ENCODE measurements at regions of chr17 and their contacts with region 1.

Region 1: DNA sequence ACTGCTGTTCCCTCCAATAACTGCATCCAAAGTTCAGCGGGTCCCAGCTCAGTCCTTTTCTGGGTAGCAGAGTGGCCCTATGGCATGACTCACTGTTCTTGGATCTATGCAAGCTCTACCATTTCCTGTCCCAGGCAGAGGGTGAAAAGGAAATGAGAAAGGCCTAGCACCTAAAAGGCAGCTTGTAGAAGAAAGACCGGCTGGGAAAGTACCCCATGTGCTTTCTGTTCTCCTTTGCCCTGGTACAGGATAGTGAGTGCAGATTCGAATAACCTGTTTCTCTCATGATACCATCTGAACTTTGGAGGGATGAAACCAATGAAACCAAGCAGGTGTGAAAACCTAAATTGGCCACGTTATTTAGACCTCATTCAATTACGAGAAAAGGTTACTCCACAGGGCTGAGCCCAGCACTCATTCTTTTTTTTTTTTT is 12.7 kb upstream of the HASPIN start:
- DNase-seq: peak; percentile 82
- ATAC-seq: peak; percentile 98
- H3K4me3 Mint-ChIP-seq: peak overlapping the region; percentile 55
- H3K27ac Mint-ChIP-seq: peak overlapping the region; percentile 83
- H3K4me1 Mint-ChIP-seq: peaks cover 55% of the 10 kb centered on the region
- H3K27me3 Mint-ChIP-seq: no peaks in the 10 kb centered on the region

Region 2: GRCh38 chr17:3683054-3683511 is 27.9 kb before region 1 on chr17:
- CTCF ChIA-PET with region 1: interaction called, 4 read pairs
- POLR2A ChIA-PET with region 1: no interaction called
- intact Hi-C with region 1: loop called in 1 of 2 experiments (anchors 2 kb)
- DNase-seq: peak; percentile 76
- ATAC-seq: peak; percentile 96
- H3K4me3 Mint-ChIP-seq: no peak overlapping the region
- H3K27ac Mint-ChIP-seq: peak overlapping the region; percentile 39
- H3K4me1 Mint-ChIP-seq: peaks cover 10% of the 10 kb centered on the region
- H3K27me3 Mint-ChIP-seq: no peaks in the 10 kb centered on the region

Region 3: DNA sequence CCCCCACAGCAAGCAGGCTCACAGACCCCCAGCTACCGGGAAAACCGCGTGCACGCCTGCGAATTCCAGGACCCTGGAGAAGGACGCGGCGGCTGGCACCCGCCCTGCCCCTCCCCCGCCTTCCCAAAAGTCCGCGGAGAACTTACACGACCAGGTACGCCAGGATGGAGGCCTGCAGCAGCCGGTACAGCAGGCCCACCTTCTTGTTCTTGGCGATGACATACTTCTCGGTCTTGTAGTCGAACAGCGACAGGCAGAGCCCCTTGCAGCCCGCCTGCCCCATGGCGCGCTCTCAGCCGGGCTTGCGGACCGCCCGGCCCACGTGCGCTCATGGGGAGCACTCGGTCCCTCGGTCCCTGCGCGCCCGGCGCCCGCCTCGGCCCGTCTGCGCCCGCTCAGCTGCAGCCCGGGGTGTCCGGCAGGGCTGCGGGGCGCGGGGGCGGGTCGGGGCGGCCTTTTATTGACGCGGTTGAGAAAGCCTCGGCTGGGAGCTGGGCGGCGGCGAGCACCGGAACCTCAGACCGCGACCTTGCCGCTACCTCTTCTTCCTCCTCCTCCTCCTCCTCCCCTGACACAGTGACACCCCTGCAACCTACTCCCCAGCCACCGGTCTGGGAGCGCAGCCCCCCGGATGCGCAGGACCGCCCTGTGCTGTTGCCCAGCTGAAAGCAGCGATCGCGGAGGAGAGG is 15.1 kb before region 1 on chr17 and contains the start of gene P2RX5:
- CTCF ChIA-PET with region 1: interaction called, 6 read pairs
- POLR2A ChIA-PET with region 1: interaction called, 6 read pairs
- intact Hi-C with region 1: loop called (anchors 1 to 2 kb)
- DNase-seq: peak; percentile 67
- ATAC-seq: peak; percentile 48
- H3K4me3 Mint-ChIP-seq: peak within 1 kb of the TSS; percentile 81
- H3K27ac Mint-ChIP-seq: peak within 1 kb of the TSS; percentile 94
- H3K4me1 Mint-ChIP-seq: peaks cover 15% of the 10 kb centered on the region
- H3K27me3 Mint-ChIP-seq: no peaks in the 10 kb centered on the region
- total RNA-seq, gene P2RX5: 69.7 to 77.5 TPM

Region 4: GRCh38 chr17:3761036-3761917 is 50.3 kb after region 1 on chr17:
- CTCF ChIA-PET with region 1: interaction called, 3 read pairs
- POLR2A ChIA-PET with region 1: interaction called, 3 read pairs
- intact Hi-C with region 1: loop called in 1 of 2 experiments (anchors 2 kb)
- DNase-seq: no peak
- ATAC-seq: no peak
- H3K4me3 Mint-ChIP-seq: no peak overlapping the region
- H3K27ac Mint-ChIP-seq: no peak overlapping the region
- H3K4me1 Mint-ChIP-seq: peaks cover 33% of the 10 kb centered on the region
- H3K27me3 Mint-ChIP-seq: no peaks in the 10 kb centered on the region

Region 5: GRCh38 chr17:3857121-3858100 is 146.4 kb after region 1 on chr17:
- CTCF ChIA-PET with region 1: no interaction called
- POLR2A ChIA-PET with region 1: no interaction called
- intact Hi-C with region 1: no loop called
- DNase-seq: no peak
- ATAC-seq: no peak
- H3K4me3 Mint-ChIP-seq: no peak overlapping the region
- H3K27ac Mint-ChIP-seq: no peak overlapping the region
- H3K4me1 Mint-ChIP-seq: no peaks in the 10 kb centered on the region
- H3K27me3 Mint-ChIP-seq: peaks cover 2% of the 10 kb centered on the region